ENCODE measurements at regions of chr11 and their contacts with region 1.

Region 1: GRCh38 chr11:9396752-9397151 is 12.3 kb downstream of the IPO7 start:
- DNase-seq: no peak
- ATAC-seq: no peak

Region 2: DNA sequence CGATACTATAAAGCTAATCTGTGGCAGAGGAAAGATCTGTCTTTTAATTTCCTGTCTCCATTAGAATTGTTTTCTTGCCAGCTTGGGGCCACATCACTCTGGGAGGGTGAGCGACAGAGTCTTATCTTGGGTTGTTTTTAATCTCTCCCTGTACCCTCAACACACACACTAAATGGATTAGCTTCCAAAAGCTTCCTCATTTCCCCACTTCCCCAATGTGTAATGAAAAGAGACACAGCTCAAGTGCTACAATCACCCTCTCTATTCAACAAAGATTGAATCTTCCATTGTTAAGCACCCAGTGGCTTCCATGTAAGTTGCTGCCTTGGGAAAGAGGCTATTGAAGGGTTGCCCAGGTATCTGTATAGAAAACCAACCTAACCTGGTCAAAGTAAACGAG is 447.9 kb before region 1 on chr11:
- intact Hi-C with region 1: no loop called
- DNase-seq: no peak
- ATAC-seq: no peak

Region 3: GRCh38 chr11:9203691-9204311 is 193.0 kb before region 1 on chr11:
- intact Hi-C with region 1: loop called in 1 of 2 experiments (anchors 10 kb)
- DNase-seq: no peak
- ATAC-seq: peak; percentile 61 to 76